CD14-positive monocyte (primary cell): ENCODE measurements at regions of chr11 and their contacts with region 1.

Region 1: DNA sequence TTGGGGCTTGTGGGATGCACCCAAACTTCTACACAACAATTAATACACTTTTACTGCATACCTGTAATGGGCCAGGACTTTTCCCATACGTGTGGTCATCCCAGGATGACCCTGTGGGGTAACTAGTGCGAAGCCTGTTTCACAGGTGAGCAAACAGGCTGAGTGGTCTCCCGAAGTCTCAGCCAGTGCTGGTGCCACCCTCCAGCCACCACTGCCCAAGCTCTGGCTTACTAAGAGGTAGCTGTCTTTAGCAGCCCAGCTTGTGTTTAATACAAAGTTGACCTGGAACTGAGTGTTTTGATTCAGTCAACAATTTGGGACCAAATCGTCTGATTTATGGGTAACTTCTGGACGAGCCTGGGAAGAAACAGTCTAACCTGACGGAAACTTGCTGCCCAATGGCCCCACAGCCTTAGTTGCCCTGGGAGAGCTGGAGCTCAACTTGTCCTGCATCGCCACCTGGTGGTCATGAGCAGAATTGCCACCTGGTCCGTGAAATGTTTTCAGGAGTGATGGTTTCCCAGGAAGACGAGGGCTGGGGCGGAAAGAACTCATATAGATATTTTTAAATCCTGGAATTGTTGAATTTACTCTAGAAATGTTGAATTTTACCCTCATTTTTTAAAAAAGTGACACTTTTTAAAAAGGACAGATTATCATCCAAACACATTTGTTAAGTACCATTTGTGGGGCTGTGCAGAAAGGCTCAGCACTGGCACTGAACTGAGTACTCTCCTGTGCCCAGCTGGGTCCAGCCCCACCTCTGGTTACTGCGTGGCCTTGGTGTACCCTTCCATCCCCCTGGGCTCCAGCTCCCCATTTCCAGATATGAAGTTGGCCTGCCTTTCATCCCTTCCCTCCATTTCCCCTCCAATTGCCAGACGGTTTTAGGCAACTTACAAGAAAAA is 95.5 kb upstream of the PARVA start:
- DNase-seq: peak; percentile 50 to 72 (median 68)
- H3K4me3 ChIP-seq: no peak overlapping the region
- H3K4me3 Mint-ChIP-seq: peak overlapping the region in 1 of 2 donors; percentile 52
- H3K27ac ChIP-seq: no peak overlapping the region
- H3K27ac Mint-ChIP-seq: no peak overlapping the region
- H3K4me1 ChIP-seq: peaks cover 3 to 12% of the 10 kb centered on the region in 2 donors
- H3K4me1 Mint-ChIP-seq: peaks cover 13% of the 10 kb centered on the region
- H3K27me3 ChIP-seq: no peaks in the 10 kb centered on the region
- H3K27me3 Mint-ChIP-seq: peaks cover 0 to 19% (median 9%) of the 10 kb centered on the region in 3 donors
- CTCF ChIP-seq: peak; percentile 90

Region 2: DNA sequence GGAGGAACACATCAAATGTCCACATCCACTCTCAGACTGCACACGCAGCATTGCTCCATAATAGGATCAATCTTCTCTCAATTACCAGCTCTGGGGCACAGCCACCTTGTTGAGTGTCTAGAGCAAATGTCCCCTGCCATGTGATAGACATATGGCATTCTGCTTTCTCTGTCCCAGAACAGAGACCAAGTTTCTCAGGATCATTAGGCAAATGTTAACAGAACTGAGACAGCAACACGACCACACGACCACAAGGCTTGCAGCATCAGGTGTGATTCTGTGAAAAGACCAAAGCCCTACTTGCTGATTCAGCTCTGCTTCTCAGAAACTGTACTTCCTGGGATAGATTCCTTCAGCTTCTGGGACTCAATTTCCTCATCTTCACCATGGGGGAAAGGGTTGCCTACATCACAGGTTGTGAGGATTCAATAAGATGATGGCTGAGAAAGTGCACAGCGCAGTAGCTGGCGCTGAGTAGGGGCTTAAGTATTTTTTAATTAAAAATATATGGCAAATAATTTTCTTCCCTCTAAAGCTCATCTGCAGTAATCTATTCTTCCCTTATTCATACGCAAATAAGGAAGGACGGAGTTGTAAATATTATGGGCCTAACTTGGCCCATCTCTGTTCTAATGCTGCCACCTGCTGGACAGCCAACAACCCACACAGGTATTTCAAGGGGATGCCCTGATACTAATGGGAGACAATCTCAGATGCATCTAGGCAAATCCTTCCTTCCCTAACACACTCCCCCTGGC is 494.3 kb before region 1 on chr11:
- intact Hi-C with region 1: loop called in 1 of 2 experiments (anchors 5 kb)
- DNase-seq: peak; percentile 55 to 66 (median 64)
- H3K4me3 ChIP-seq: no peak overlapping the region
- H3K4me3 Mint-ChIP-seq: no peak overlapping the region
- H3K27ac ChIP-seq: no peak overlapping the region
- H3K27ac Mint-ChIP-seq: peak overlapping the region in 1 of 7 donors; percentile 53
- H3K4me1 ChIP-seq: no peaks in the 10 kb centered on the region
- H3K4me1 Mint-ChIP-seq: peaks cover 6% of the 10 kb centered on the region
- H3K27me3 ChIP-seq: peaks cover under 1 to 2% of the 10 kb centered on the region in 2 donors
- H3K27me3 Mint-ChIP-seq: peaks cover 2 to 12% (median 10%) of the 10 kb centered on the region in 3 donors
- CTCF ChIP-seq: peak; percentile 83

Region 3: DNA sequence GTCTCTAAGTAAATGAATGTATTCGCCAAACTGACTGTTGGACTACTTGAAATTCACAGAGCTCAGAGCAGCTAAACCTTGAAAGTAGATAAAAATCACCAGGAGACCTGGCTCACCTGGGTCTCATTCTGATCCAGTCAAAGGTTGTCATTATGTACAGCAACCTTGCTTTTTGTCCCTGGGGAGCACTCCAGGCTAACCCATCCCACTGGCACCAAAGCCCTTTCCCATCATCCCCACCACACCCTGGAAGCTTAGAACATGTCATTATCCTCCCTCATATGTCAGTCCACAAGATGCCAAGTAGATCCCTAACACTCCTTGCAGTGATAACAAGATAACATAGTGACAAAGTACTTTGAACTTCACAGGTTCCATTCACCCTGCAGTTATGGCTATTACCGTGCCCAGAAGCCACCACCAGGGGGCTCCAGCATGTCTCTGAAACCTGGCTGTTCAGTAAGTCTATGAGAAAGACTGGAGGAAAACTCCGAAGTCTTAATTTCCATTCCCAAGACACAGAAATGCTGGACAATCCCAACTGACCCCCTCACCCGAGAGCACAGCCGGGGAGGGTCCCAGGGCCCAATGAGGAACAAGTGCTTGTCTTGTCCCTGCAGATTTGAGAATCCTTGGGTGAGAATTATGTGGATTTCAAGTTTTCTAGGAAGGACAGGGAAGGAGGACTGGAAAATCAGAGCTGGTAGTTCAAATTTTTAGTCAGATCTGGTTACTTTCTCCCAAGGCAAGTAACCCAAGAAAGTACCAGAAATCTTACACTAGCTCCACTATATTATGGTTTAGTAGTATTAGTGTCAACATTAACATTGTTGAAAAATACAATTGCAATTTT is 483.0 kb before region 1 on chr11:
- intact Hi-C with region 1: loop called in 1 of 2 experiments (anchors 5 kb)
- DNase-seq: peak; percentile 29 to 71 (median 60)
- H3K4me3 ChIP-seq: no peak overlapping the region
- H3K4me3 Mint-ChIP-seq: no peak overlapping the region
- H3K27ac ChIP-seq: no peak overlapping the region
- H3K27ac Mint-ChIP-seq: no peak overlapping the region
- H3K4me1 ChIP-seq: no peaks in the 10 kb centered on the region
- H3K4me1 Mint-ChIP-seq: no peaks in the 10 kb centered on the region
- H3K27me3 ChIP-seq: peaks cover 10 to 11% of the 10 kb centered on the region in 2 donors
- H3K27me3 Mint-ChIP-seq: peaks cover 7 to 22% (median 10%) of the 10 kb centered on the region in 3 donors
- CTCF ChIP-seq: peak; percentile 72

Region 4: GRCh38 chr11:11931461-11932055 is 350.3 kb before region 1 on chr11:
- intact Hi-C with region 1: loop called in 1 of 2 experiments (anchors 5 kb)
- DNase-seq: peak; percentile 1 to 24 (median 20)
- H3K4me3 ChIP-seq: no peak overlapping the region
- H3K4me3 Mint-ChIP-seq: no peak overlapping the region
- H3K27ac ChIP-seq: no peak overlapping the region
- H3K27ac Mint-ChIP-seq: no peak overlapping the region
- H3K4me1 ChIP-seq: no peaks in the 10 kb centered on the region
- H3K4me1 Mint-ChIP-seq: peaks cover 3% of the 10 kb centered on the region
- H3K27me3 ChIP-seq: no peaks in the 10 kb centered on the region
- H3K27me3 Mint-ChIP-seq: no peaks in the 10 kb centered on the region
- CTCF ChIP-seq: peak; percentile 79

Region 5: GRCh38 chr11:12050470-12051286 is 231.1 kb before region 1 on chr11:
- intact Hi-C with region 1: loop called (anchors 2 to 5 kb)
- DNase-seq: no peak
- H3K4me3 ChIP-seq: no peak overlapping the region
- H3K4me3 Mint-ChIP-seq: no peak overlapping the region
- H3K27ac ChIP-seq: no peak overlapping the region
- H3K27ac Mint-ChIP-seq: no peak overlapping the region
- H3K4me1 ChIP-seq: peaks cover 19 to 21% of the 10 kb centered on the region in 2 donors
- H3K4me1 Mint-ChIP-seq: peaks cover 27% of the 10 kb centered on the region
- H3K27me3 ChIP-seq: no peaks in the 10 kb centered on the region
- H3K27me3 Mint-ChIP-seq: peaks cover 0 to 7% (median 1%) of the 10 kb centered on the region in 3 donors
- CTCF ChIP-seq: no peak